GM10248 (cell line): ENCODE measurements at regions of chr7 and their contacts with region 1.

Region 1: DNA sequence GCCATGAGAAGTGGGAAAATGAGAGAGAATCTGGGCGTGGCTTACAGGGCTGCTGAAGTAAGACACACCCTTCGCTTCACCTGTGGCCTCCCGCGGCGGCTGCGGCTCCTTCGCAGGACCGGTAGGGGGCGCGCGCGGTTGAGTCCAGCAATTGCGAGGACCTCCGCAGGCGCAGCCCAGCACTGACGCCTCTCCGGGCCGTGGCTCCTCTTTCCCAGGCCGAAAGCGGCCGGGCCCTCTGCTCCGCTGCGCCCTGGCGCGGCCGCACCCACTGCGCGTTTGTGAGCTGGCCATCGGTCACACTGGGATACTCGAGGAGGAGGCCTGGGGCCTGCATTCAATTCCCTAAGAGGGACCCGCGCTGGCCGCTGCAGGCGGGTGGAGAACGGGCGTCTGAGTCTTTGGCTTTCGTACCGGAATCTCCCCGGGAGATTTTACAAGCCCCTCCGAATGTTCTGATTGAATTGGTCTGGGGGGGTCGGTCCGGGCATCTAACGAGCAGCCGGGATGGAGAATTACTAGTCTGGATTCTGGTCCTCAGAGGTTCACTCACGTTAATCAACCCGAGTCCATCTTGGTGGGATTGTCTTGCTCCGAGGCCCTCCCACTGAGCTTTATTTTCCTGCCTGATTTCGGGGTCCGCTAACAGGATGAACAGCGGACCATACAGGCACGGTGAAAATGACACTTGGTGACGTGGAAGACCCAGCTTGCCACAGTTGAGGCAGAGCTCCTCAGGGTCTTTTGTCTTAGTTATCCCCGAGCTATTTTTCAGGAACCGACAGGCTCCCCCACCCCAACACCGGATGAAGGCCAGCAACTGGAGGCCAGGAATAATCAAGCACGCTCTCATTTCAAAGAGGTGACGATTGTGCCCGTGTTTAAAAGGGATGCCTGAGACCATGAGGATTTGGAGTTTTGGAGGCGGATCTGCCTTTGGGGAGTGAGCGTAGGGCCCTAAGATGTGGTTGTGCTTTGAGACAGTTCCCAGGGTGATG is at the start of gene LRRD1:
- DNase-seq: peak; percentile 93
- CTCF ChIP-seq: peak; percentile 99

Region 2: DNA sequence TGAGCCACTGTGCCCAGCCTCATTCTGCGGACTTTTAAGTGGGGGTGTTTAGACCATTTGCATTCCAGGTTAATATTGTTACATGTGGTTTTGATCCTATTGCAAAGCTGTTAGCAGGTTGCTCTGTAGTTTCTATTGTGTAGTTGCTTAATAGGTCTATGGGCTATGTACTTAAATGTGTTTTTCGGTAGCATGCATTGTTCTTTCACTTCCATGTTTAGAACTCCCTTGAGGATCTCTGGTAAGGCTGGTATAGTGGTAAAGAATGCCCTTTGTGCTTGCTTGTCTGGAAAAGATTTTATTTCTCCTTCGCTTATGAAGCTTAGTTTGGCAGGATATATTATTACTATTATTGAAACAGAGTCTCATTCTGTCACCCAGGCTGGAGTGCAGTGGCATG is 13.1 kb after region 1 on chr7:
- CTCF ChIA-PET with region 1: interaction called, 44 read pairs
- POLR2A ChIA-PET with region 1: no interaction called
- DNase-seq: no peak
- CTCF ChIP-seq: no peak

Region 3: DNA sequence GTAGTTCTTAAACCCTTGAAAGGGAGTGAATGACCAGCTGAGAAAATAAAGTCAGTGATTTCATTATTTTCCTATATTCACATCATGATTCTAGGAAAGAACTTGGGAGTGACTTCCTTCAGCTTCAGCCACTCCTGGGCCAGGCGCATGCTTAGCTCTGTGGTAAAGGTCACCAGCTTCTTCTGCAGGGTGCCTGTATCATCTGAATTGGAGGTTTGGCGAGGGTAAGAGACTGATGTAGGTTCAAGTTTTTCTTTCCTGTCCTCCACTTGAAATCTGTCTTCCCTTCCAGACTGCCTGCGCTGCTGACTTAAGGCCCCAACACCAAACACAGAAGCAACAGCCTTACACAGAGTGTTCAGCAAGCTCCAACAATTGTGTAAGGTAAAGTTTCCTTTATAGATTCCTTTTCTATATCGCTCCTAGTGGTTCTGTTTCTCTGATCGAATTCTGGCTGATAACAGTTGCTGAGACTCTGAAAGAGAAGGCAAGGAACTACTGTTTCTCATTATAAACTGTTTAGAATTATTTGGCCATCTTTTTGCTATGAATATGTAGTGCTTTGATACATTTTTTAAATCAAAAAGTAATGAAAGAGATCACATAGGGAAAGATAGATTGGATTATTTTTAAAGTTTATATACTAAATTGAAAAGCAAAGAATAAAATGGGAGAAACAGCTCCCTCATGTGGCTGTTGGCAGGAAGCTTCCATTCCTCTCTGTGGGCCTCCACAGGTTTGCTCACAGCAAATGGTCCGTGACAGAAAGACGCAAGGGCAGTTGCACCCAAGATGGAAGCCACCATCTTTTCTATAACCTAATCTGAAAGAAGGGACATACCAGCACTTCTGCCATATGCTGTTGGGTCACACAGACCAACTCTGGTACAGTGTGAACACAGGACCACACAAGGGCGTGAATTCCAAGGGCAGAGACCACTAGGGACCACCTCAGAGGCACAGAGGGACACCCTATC is 282.1 kb after region 1 on chr7:
- CTCF ChIA-PET with region 1: interaction called, 10 read pairs
- POLR2A ChIA-PET with region 1: no interaction called
- DNase-seq: peak; percentile 44
- CTCF ChIP-seq: peak; percentile 60